Activated CD8-positive, alpha-beta T cell treated with anti-CD3 and anti-CD28 coated beads for 36 hours (primary cell): ENCODE measurements at regions of chr1 and their contacts with region 1.

Region 1: DNA sequence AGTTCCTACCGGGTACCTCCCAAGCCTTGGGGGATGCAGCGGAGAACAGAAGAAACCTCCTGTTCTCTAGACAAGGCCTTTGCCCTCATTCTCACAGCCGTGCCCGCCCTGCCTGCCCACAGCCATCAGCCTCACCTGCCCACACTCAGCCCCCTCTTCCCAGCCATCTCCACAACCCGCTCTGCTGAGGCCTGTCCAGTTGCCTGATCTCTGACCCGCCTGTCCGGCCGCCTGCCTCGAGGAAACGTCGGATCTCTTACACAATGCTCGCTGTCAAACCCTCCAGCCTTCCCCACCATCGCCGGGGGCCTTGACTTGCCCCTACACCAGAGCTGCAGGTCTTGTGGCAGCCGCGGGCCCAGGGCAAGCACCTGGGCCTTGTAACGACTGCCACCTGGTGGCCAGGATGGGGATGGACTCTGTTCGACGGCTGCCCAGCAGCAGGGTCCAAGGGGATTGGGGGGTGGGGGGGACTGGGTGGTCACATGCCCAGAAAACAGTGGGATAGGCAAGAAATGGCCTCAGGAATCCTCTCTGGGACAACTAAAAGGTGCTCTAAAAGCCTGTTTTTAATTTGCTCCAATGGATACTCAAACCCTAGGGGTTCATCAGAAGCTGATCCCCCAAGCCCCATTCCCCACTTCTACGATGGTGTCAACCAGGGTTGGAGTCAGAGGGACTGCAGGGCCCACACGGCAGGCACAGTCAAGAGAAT is 31.0 kb downstream of the SLC45A1 start:
- DNase-seq: peak; percentile 75
- ATAC-seq: peak; percentile 87
- H3K4me3 Mint-ChIP-seq: no peak overlapping the region
- H3K27ac Mint-ChIP-seq: no peak overlapping the region
- H3K4me1 Mint-ChIP-seq: no peaks in the 10 kb centered on the region
- H3K27me3 Mint-ChIP-seq: peaks cover 1% of the 10 kb centered on the region
- CTCF ChIP-seq: peak; percentile 78

Region 2: DNA sequence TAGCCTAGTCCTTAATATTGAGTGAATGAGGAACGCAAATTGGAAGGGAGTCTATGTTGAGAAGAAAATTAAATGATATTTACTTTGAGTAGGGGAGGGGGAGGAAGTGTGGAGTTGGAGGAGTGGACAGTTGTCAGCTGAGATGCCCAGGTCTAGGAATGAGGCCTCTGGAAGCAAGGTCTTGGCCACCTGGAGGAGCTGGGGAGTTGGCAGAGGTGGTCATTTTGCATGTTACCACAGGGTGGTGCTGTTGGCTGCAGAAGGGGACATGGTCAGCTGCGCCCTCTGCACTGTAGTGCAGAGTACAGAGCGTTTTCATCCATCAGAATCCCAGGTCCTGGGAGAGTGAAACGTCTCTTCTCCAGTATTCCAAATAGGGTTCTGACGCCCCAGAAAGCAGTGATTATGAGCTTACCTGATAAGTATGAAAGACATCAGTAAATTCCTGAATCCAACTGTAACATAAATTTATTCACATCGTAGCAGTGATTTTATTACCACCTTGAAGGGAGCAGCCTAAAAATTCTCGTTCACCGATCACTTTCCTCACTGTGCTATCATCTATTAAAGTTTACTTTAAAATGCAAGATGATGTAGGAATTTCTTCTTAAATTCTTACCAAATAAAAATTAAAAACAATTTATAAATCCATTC is 373.6 kb before region 1 on chr1:
- CTCF ChIA-PET with region 1: interaction called, 14 read pairs
- POLR2A ChIA-PET with region 1: no interaction called
- intact Hi-C with region 1: no loop called
- DNase-seq: peak; percentile 59
- ATAC-seq: peak; percentile 95
- H3K4me3 Mint-ChIP-seq: no peak overlapping the region
- H3K27ac Mint-ChIP-seq: peak overlapping the region; percentile 35
- H3K4me1 Mint-ChIP-seq: peaks cover 16% of the 10 kb centered on the region
- H3K27me3 Mint-ChIP-seq: no peaks in the 10 kb centered on the region
- CTCF ChIP-seq: peak; percentile 77

Region 3: DNA sequence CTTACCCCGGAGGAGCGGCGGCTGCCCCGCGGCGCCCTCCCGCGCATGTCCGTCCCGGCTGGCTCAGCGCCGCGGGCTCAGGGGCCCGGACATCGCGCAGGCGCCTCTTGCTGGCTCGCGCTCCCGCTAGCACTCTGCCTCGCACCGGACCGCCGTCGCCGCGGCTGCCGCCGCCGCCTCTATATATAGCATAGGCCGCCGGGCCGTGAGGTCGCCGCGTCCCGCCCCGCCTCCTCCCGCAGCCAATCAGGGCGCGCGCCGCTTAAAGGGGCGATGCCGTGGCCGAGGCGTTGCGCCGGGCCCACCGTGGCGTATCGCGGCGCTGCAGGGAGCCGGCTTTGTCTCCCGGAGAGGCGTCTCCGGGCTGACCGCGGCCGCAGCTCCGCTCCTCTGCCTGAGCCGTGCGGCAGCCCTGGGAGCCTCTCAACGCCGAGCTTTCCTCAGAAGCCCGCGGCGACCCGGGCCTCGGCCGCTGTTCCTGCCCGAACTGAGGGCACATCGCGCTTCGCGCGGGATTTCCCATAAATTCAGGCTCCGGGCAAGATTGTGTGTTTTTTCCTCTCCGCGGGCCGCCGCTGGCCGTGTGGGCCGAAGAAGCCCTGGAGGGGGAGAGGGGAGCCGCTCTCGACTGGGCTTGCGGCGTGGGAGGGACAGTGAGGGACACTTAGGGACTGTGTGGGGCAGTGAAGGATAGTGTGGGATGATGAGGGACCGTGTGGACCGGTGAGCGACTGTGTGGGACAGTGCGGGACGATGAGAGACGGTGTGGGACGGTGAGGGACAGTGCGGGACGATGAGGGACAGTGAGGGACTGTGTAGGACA is 322.6 kb before region 1 on chr1 and contains the start of gene ERRFI1:
- CTCF ChIA-PET with region 1: interaction called, 25 read pairs
- POLR2A ChIA-PET with region 1: no interaction called
- intact Hi-C with region 1: no loop called
- DNase-seq: peak; percentile 89
- ATAC-seq: peak; percentile 96
- H3K4me3 Mint-ChIP-seq: peak within 1 kb of the TSS; percentile 79
- H3K27ac Mint-ChIP-seq: peak within 1 kb of the TSS; percentile 47
- H3K4me1 Mint-ChIP-seq: peaks cover 9% of the 10 kb centered on the region
- H3K27me3 Mint-ChIP-seq: peaks cover 32% of the 10 kb centered on the region
- CTCF ChIP-seq: no peak
- total RNA-seq, gene ERRFI1: 1.6 to 2.2 TPM